ENCODE measurements at regions of chr7 and their contacts with region 1.

Region 1: DNA sequence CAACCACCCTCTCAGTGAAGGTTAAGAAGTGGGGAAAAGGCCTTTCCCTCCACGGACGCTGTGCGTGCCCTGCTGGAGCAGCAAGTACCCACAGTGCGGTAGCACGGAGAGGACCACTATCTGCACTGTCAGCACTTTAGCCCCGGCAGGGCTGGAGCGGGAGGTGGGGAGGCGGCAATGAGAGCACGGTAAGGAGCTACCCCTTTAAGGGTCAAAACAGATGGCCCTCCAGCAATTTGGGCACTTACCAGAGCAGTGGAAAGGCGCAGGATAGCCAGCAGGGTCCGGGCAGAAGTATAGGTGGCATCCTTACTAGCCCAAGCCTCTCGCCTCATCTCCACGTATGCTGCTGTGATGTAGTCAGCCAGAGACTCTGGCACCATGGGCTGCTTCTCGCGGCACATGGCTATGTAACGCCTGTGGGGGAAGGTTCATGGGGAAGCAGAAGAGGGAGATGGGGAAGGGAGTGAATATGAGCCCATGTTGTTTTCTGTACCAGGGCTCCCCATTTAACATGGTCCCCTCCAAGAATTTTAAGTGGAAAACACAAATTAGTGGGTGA is 5.2 kb downstream of the COPS6 start:
- DNase-seq: no peak
- ATAC-seq: no peak
- H3K4me3 Mint-ChIP-seq: no peak overlapping the region
- H3K27ac Mint-ChIP-seq: no peak overlapping the region
- H3K4me1 Mint-ChIP-seq: peaks cover 53% of the 10 kb centered on the region
- H3K27me3 Mint-ChIP-seq: no peaks in the 10 kb centered on the region
- CTCF ChIP-seq: no peak

Region 2: DNA sequence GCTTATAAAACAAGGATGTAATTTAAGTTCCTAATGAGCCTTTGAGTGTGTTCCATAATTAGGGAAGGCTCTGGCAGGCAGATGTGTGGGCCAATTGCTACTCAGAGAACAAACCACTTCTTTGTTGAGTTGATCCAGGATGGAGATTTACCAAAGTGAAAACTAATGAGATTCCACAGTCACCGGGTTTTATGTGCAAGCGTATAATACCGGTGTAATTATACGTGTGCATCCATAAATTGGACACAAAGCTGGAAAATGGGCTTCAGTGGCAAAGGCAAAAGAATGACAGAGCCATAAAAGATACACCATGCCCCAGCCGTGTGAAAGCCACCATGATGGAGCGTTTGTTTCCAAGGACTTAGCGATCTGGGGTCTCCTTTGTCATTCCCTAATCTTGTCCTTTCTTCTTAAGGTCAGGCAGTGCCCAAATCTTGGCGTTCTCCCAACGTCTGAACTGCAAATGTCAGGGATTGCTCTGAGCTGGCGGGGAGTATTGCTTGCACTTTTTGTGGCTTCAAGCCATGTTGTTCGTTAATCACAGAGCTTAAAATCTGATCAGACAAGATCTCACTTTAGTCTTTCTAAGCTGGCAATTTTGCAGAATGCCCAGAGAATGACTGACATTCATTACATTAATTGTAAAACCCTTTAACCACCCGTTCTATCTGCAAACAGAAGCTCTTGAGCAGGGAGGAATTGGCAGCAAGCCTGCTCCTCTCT is 1406.8 kb before region 1 on chr7:
- CTCF ChIA-PET with region 1: no interaction called
- POLR2A ChIA-PET with region 1: no interaction called
- intact Hi-C with region 1: no loop called
- DNase-seq: no peak
- ATAC-seq: no peak
- H3K4me3 Mint-ChIP-seq: no peak overlapping the region
- H3K27ac Mint-ChIP-seq: no peak overlapping the region
- H3K4me1 Mint-ChIP-seq: no peaks in the 10 kb centered on the region
- H3K27me3 Mint-ChIP-seq: peaks cover 3% of the 10 kb centered on the region
- CTCF ChIP-seq: no peak

Region 3: GRCh38 chr7:99928994-99929729 is 164.8 kb before region 1 on chr7 and contains the start of gene GJC3:
- CTCF ChIA-PET with region 1: no interaction called
- POLR2A ChIA-PET with region 1: no interaction called
- intact Hi-C with region 1: no loop called
- DNase-seq: peak; percentile 61
- ATAC-seq: peak; percentile 89
- H3K4me3 Mint-ChIP-seq: peak within 1 kb of the TSS; percentile 63
- H3K27ac Mint-ChIP-seq: no peak within 1 kb of the TSS
- H3K4me1 Mint-ChIP-seq: peaks cover 25% of the 10 kb centered on the region
- H3K27me3 Mint-ChIP-seq: peaks cover 9% of the 10 kb centered on the region
- CTCF ChIP-seq: peak; percentile 35
- total RNA-seq, gene GJC3: 0.41 to 0.47 TPM

Region 4: GRCh38 chr7:100061518-100062193 is 32.4 kb before region 1 on chr7:
- CTCF ChIA-PET with region 1: no interaction called
- POLR2A ChIA-PET with region 1: no interaction called
- intact Hi-C with region 1: no loop called
- DNase-seq: no peak
- ATAC-seq: no peak
- H3K4me3 Mint-ChIP-seq: no peak overlapping the region
- H3K27ac Mint-ChIP-seq: no peak overlapping the region
- H3K4me1 Mint-ChIP-seq: no peaks in the 10 kb centered on the region
- H3K27me3 Mint-ChIP-seq: no peaks in the 10 kb centered on the region
- CTCF ChIP-seq: no peak

Region 5: GRCh38 chr7:100081535-100082102 is 12.4 kb before region 1 on chr7 and contains the start of gene ZNF3:
- CTCF ChIA-PET with region 1: no interaction called
- POLR2A ChIA-PET with region 1: interaction called, 25 read pairs
- intact Hi-C with region 1: no loop called
- DNase-seq: peak; percentile 99
- ATAC-seq: peak; percentile 83
- H3K4me3 Mint-ChIP-seq: peak within 1 kb of the TSS; percentile 87
- H3K27ac Mint-ChIP-seq: peak within 1 kb of the TSS; percentile 87
- H3K4me1 Mint-ChIP-seq: peaks cover 21% of the 10 kb centered on the region
- H3K27me3 Mint-ChIP-seq: no peaks in the 10 kb centered on the region
- CTCF ChIP-seq: peak; percentile 96
- total RNA-seq, gene ZNF3: 16.4 to 18.9 TPM

Region 6: GRCh38 chr7:100111914-100112313 is 17.9 kb after region 1 on chr7:
- CTCF ChIA-PET with region 1: no interaction called
- POLR2A ChIA-PET with region 1: interaction called, 187 read pairs
- intact Hi-C with region 1: no loop called
- DNase-seq: no peak
- ATAC-seq: no peak
- H3K4me3 Mint-ChIP-seq: no peak overlapping the region
- H3K27ac Mint-ChIP-seq: no peak overlapping the region
- H3K4me1 Mint-ChIP-seq: no peaks in the 10 kb centered on the region
- H3K27me3 Mint-ChIP-seq: no peaks in the 10 kb centered on the region
- CTCF ChIP-seq: no peak